GM12878 (cell line): ENCODE measurements at regions of chr2 and their contacts with region 1.

Region 1: DNA sequence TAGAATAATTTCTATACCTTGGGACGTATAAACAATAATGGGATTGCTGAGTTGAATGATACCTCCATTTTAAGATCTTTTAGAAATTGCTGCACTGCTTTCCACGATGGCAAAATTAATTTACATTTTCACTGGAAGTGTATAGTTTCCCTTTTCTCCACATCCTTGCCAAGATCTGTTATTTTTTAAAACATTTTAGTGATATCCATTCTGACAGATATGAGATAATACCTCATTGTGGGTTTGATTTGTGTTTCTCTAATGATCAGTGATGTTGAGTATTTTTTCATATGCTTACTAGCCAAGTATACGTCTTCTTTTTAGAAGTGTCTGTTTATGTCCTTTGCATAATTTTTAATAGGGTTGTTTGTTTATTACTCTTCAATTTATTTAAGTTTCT is 908.5 kb upstream of the CNTNAP5 start:
- DNase-seq: no peak
- ATAC-seq: no peak
- H3K4me3 ChIP-seq: no peak overlapping the region
- H3K27ac ChIP-seq: no peak overlapping the region
- H3K4me1 ChIP-seq: no peaks in the 10 kb centered on the region
- H3K27me3 ChIP-seq: no peaks in the 10 kb centered on the region
- CTCF ChIP-seq: no peak
- EP300 ChIP-seq: no peak
- POLR2A ChIP-seq: no peak
- RAD21 ChIP-seq: no peak

Region 2: GRCh38 chr2:123080331-123080730 is 36.3 kb before region 1 on chr2:
- CTCF ChIA-PET with region 1: no interaction called
- POLR2A ChIA-PET with region 1: no interaction called
- RAD21 ChIA-PET with region 1: no interaction called
- SMC1A ChIA-PET with region 1: no interaction called
- in situ Hi-C with region 1: no loop called
- intact Hi-C with region 1: no loop called
- DNase-seq: peak; percentile 11
- ATAC-seq: peak; percentile 96
- H3K4me3 ChIP-seq: no peak overlapping the region
- H3K27ac ChIP-seq: no peak overlapping the region
- H3K4me1 ChIP-seq: no peaks in the 10 kb centered on the region
- H3K27me3 ChIP-seq: no peaks in the 10 kb centered on the region
- CTCF ChIP-seq: no peak
- EP300 ChIP-seq: peak in 1 of 2 experiments; percentile 62; a peak in 2 of 4 replicates
- POLR2A ChIP-seq: no peak
- RAD21 ChIP-seq: no peak

Region 3: DNA sequence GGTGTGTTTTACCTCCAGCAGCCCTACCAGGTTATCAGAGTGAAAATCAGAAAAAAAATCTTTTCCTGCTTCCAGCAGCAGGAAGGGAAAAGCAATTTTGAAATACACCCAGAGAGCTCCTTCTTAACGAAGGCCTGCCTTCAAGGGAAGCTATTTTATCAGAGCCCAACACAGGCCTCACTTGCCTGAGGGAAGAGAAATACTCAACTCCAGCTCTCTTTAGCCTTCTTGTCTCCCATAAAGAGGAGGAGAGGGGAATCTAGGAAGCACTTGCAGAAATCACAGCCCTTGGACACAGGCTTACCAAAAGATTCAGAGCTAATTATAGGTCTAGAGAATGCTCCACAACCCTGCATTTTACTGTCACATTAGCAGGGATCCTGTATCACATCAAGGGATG is 12.4 kb after region 1 on chr2:
- CTCF ChIA-PET with region 1: no interaction called
- POLR2A ChIA-PET with region 1: no interaction called
- RAD21 ChIA-PET with region 1: no interaction called
- SMC1A ChIA-PET with region 1: interaction called, 12 read pairs
- in situ Hi-C with region 1: no loop called
- intact Hi-C with region 1: no loop called
- DNase-seq: no peak
- ATAC-seq: no peak
- H3K4me3 ChIP-seq: no peak overlapping the region
- H3K27ac ChIP-seq: no peak overlapping the region
- H3K4me1 ChIP-seq: no peaks in the 10 kb centered on the region
- H3K27me3 ChIP-seq: no peaks in the 10 kb centered on the region
- CTCF ChIP-seq: no peak
- EP300 ChIP-seq: no peak
- POLR2A ChIP-seq: no peak
- RAD21 ChIP-seq: no peak

Region 4: GRCh38 chr2:123578016-123578415 is 461.4 kb after region 1 on chr2:
- CTCF ChIA-PET with region 1: no interaction called
- POLR2A ChIA-PET with region 1: no interaction called
- RAD21 ChIA-PET with region 1: no interaction called
- SMC1A ChIA-PET with region 1: no interaction called
- in situ Hi-C with region 1: no loop called
- intact Hi-C with region 1: no loop called
- DNase-seq: no peak
- ATAC-seq: no peak
- H3K4me3 ChIP-seq: no peak overlapping the region
- H3K27ac ChIP-seq: no peak overlapping the region
- H3K4me1 ChIP-seq: no peaks in the 10 kb centered on the region
- H3K27me3 ChIP-seq: no peaks in the 10 kb centered on the region
- CTCF ChIP-seq: no peak
- EP300 ChIP-seq: no peak
- POLR2A ChIP-seq: no peak
- RAD21 ChIP-seq: no peak